ENCODE measurements at regions of chr5 and their contacts with region 1.

Region 1: DNA sequence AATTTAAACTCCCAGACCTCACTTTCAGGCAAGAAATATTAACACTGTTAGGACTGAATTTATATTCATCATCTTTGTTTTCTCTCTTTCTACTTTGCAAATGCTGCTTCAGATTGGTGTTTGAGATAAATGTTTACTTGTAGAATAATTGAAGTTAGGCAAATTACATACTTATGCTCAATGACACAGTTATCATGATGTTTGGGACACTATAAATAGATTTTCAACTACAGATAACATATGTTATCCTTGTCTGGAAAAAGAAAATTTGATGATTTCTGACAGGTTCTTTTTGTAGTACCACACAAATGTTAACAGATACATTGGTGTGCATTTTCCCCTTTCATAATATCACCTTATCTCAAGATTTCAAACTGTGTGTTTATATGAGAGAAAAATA is 7.9 kb downstream of the PRR16 start:
- DNase-seq: no peak
- H3K4me3 ChIP-seq: no peak overlapping the region
- H3K27ac ChIP-seq: no peak overlapping the region
- H3K4me1 ChIP-seq: peaks cover 25% of the 10 kb centered on the region
- H3K27me3 ChIP-seq: no peaks in the 10 kb centered on the region
- CTCF ChIP-seq: no peak

Region 2: DNA sequence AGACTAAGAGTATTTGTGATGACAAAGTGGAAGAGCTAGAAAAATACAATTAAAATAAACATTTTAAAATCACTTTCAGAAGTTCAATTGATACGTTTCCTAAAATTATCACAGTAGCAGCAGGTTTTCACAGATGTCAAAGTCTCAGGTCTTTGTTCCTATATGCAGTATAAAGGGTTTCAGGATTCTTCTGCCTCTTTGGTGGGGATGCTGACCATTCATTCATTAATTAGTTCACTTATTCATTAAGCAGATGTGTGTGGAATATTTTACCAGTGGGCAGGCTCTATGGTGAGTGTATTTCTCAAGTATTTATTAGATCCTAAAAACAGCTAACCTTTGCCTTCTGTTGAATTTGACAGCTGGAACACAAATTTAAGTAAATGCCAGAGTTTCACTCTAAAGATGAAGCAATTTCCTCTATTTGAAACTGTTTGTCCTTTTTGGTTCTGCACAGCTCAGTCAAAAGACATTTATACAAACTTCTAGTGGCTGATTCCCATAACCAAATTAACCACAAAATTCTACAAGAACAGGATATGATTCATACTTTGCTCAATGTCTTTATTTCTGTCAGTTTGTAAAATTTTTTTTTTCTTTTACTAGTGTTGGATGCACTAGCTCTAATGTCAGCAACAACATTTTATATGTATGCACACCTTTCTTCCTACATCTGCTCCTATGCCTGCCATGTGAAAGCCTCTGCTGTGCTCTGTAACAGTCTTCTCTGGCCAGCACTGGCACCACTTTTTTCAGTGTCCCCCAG is 83.8 kb before region 1 on chr5:
- intact Hi-C with region 1: no loop called
- DNase-seq: no peak
- H3K4me3 ChIP-seq: no peak overlapping the region
- H3K27ac ChIP-seq: peak overlapping the region; percentile 69
- H3K4me1 ChIP-seq: no peaks in the 10 kb centered on the region
- H3K27me3 ChIP-seq: no peaks in the 10 kb centered on the region
- CTCF ChIP-seq: no peak

Region 3: DNA sequence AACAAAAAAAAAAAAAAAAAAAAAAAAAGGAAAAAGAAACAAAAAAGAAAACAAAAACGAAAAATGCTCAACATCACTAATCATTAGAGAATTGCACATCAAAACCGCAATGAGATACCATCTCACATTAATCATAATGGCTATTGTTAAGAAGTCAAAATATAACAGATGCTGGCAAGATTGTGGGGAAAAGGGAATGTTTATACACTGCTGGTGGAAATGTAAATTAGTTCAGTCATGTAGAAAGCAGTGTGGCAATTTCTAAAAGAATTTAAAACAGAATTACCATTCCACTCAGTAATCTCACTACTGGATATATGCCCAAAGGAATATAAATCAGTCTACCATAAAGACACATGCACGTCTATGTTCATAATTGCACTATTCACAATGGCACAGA is 58.3 kb before region 1 on chr5:
- intact Hi-C with region 1: no loop called
- DNase-seq: no peak
- H3K4me3 ChIP-seq: no peak overlapping the region
- H3K27ac ChIP-seq: no peak overlapping the region
- H3K4me1 ChIP-seq: peaks cover 3% of the 10 kb centered on the region
- H3K27me3 ChIP-seq: no peaks in the 10 kb centered on the region
- CTCF ChIP-seq: no peak

Region 4: GRCh38 chr5:120499876-120500563 is 28.0 kb after region 1 on chr5:
- intact Hi-C with region 1: loop called (anchors 2 kb)
- DNase-seq: no peak
- H3K4me3 ChIP-seq: no peak overlapping the region
- H3K27ac ChIP-seq: no peak overlapping the region
- H3K4me1 ChIP-seq: no peaks in the 10 kb centered on the region
- H3K27me3 ChIP-seq: no peaks in the 10 kb centered on the region
- CTCF ChIP-seq: no peak

Region 5: DNA sequence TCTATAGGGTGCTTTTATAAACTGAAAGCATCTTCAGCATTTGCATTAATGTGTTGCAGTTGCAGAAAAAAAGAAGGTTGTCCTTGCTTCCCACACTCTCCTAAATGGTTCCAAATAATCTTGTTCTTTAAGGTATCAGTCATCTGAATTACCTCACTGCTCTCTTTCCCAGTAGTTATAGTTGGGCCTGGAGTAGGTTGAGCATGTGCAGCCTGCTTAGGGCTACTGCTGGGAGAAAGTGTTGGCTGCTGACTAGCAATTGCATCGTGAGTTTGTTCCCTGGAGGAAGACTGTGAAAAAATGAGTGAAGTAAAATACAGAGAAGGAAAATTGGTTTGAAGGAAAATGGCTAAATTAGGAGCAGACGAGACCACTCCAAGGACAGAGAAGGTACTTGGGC is 66.7 kb after region 1 on chr5:
- intact Hi-C with region 1: no loop called
- DNase-seq: no peak
- H3K4me3 ChIP-seq: no peak overlapping the region
- H3K27ac ChIP-seq: no peak overlapping the region
- H3K4me1 ChIP-seq: peaks cover 29% of the 10 kb centered on the region
- H3K27me3 ChIP-seq: no peaks in the 10 kb centered on the region
- CTCF ChIP-seq: no peak

Measured in left ventricle myocardium inferior (tissue), 1 donor.